ENCODE measurements at regions of chr1 and their contacts with region 1.

Region 1: GRCh38 chr1:161045750-161046571 is at the start of gene USF1:
- DNase-seq: peak; percentile 96 to 97
- ATAC-seq: peak; percentile 90 to 95
- H3K4me3 ChIP-seq: peak within 1 kb of the TSS; percentile 75
- H3K27ac ChIP-seq: peak within 1 kb of the TSS; percentile 87 to 93
- H3K4me1 ChIP-seq: peaks cover 6% of the 10 kb centered on the region
- CTCF ChIP-seq: no peak
- EP300 ChIP-seq: no peak
- POLR2A ChIP-seq: peak; percentile 77
- RAD21 ChIP-seq: no peak
- polyA plus RNA-seq, gene USF1: 35.5 and 43.5 TPM in 2 replicates

Region 2: GRCh38 chr1:161021165-161021960 is 24.6 kb before region 1 on chr1:
- CTCF ChIA-PET with region 1: interaction called, 12 read pairs
- POLR2A ChIA-PET with region 1: interaction called, 32 read pairs
- DNase-seq: peak; percentile 92 to 99
- ATAC-seq: peak; percentile 93 to 94
- H3K4me3 ChIP-seq: peak overlapping the region; percentile 67
- H3K27ac ChIP-seq: peak overlapping the region; percentile 82 to 84
- H3K4me1 ChIP-seq: peaks cover 53% of the 10 kb centered on the region
- CTCF ChIP-seq: no peak
- EP300 ChIP-seq: no peak
- POLR2A ChIP-seq: peak; percentile 50
- RAD21 ChIP-seq: no peak

Region 3: GRCh38 chr1:161242313-161242712 is 196.4 kb after region 1 on chr1:
- CTCF ChIA-PET with region 1: no interaction called
- POLR2A ChIA-PET with region 1: no interaction called
- DNase-seq: no peak
- ATAC-seq: no peak
- H3K4me3 ChIP-seq: no peak overlapping the region
- H3K27ac ChIP-seq: no peak overlapping the region
- H3K4me1 ChIP-seq: no peaks in the 10 kb centered on the region
- CTCF ChIP-seq: no peak
- EP300 ChIP-seq: no peak
- POLR2A ChIP-seq: no peak
- RAD21 ChIP-seq: no peak